PC-9 (cell line): ENCODE measurements at regions of chr22 and their contacts with region 1.

Region 1: DNA sequence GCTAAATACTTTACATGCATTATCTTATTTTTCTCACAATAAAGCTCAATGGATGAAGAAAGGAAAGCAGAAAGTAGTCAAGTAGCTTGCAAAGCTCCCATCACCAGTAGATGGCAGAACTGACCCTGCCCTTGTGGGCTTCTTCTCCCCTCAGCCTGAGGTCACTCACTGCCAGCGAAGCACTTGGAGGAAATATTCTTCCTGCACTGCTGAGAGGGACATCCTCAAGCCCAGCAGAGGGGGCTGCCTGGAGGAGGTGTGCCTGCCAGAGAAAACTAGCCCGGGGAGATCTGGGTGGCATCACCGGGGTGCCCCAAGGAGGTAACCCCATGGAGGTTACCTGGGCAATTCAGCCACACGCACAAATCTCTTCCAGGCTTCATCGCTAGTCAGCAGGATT is 6.6 kb downstream of the APOL4 start:
- DNase-seq: peak; percentile 47 to 67
- H3K4me3 ChIP-seq: no peak overlapping the region
- H3K27ac ChIP-seq: no peak overlapping the region
- H3K4me1 ChIP-seq: no peaks in the 10 kb centered on the region
- H3K27me3 ChIP-seq: peaks cover 12% of the 10 kb centered on the region; the same call in 1 of the 2 replicates
- CTCF ChIP-seq: peak; percentile 82

Region 2: DNA sequence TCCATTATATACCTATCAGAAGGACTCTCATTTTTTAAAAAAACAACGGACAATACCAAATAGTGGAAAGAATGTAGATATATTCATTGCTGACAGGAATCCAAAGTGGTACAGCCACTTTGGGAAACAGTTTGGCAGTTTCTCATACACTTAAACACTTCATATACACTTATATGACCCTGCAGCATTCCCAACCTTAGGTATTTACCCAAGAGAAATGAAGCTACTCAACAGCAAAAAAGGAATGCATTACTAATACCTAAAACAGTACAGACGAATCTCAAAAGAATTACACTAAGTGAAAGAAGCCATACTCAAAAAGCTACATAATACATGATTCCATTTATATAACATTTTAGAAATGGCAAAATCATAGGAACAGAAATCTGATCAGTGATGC is 217.8 kb before region 1 on chr22:
- CTCF ChIA-PET with region 1: no interaction called
- POLR2A ChIA-PET with region 1: no interaction called
- intact Hi-C with region 1: no loop called
- DNase-seq: no peak
- H3K4me3 ChIP-seq: no peak overlapping the region
- H3K27ac ChIP-seq: no peak overlapping the region
- H3K4me1 ChIP-seq: peaks cover 6% of the 10 kb centered on the region
- H3K27me3 ChIP-seq: no peaks in the 10 kb centered on the region
- CTCF ChIP-seq: no peak

Region 3: GRCh38 chr22:36221799-36222751 is 27.1 kb after region 1 on chr22:
- CTCF ChIA-PET with region 1: no interaction called
- POLR2A ChIA-PET with region 1: no interaction called
- intact Hi-C with region 1: loop called (anchors 1 kb)
- DNase-seq: peak in 1 of 2 experiments; percentile 52
- H3K4me3 ChIP-seq: no peak overlapping the region
- H3K27ac ChIP-seq: no peak overlapping the region
- H3K4me1 ChIP-seq: no peaks in the 10 kb centered on the region
- H3K27me3 ChIP-seq: no peaks in the 10 kb centered on the region; the same call in 1 of the 2 replicates
- CTCF ChIP-seq: peak; percentile 74

Region 4: DNA sequence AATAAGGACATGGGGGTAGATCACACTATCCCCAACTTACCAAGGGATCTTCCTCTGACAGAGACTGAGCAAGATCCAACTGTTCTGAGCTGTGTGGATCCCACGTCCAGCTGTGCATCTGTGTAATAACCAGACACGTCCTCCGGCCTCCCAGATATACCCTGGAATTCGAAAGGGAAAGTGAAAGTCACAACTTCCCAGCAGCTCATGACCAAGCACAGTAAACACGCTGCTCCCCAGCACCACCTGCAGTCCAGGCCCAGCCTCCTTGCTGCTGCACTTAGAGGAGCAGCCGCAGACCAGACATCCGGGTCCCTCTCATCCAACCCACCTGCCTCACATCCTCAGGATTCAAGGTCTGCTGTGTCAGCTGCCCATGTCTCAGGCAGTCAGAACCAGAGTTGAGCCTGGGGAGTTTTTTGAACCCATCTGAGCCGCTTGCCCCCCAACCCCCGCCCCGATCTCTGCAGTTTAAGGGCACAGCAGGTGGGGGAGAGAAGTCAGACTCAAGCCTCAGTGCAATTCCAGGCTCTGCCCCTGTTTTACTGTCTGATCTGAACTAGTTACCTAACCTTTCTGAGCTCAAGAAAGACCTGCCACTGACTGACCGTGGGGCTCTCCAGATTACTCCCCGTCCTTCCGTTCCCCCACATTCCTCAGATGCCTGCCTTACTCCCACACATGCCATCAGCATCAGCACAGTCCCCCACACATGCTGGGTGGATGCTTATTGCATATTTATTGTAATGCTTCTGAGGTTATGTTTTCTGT is 44.6 kb after region 1 on chr22 and contains the start of gene APOL2:
- CTCF ChIA-PET with region 1: interaction called, 15 read pairs
- POLR2A ChIA-PET with region 1: no interaction called
- intact Hi-C with region 1: loop called (anchors 5 kb)
- DNase-seq: peak; percentile 86 to 91
- H3K4me3 ChIP-seq: peak within 1 kb of the TSS; percentile 70
- H3K27ac ChIP-seq: peak within 1 kb of the TSS; percentile 48
- H3K4me1 ChIP-seq: peaks cover 21% of the 10 kb centered on the region
- H3K27me3 ChIP-seq: no peaks in the 10 kb centered on the region
- CTCF ChIP-seq: peak; percentile 74
- total RNA-seq, gene APOL2: 19.9 and 27.4 TPM in 2 replicates

Region 5: DNA sequence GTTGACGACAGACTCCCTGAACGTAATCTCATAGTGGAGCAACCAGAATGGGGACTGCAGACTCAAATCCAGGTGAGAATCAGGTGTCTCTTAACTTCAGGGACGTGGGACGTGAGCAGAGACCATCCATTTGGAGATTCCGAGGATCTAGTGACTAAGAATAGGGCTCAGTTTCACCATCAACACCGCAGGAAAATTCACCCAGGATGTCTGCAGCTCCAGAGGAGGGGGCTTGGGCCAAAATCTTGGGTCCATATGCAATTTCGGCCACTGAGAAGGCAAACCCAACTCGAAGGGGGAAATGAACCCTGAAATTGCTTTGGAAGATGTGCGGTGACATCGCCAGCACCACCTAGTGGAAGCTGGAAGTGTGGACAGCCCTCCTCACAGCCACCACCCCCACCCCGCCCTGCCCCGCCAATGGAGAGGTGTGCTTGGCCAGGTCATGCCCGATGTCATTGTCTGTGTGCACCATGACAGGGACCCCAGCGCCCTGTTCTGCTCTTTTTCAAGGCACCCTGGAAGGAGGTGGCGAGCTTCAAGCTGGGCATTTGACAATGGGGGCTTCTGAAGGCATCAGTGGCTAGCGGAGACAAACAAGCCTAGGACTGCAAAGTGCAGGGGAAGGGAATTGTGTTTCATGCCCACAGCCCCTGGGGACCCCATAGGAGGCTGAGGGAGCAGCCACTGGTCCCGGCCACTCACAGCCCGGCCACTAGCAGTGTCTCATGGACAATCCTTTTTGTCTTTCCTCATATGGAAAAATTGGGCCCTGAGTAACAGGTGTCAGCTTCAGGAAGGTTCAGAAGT is 82.7 kb after region 1 on chr22:
- CTCF ChIA-PET with region 1: interaction called, 3 read pairs
- POLR2A ChIA-PET with region 1: no interaction called
- intact Hi-C with region 1: loop called (anchors 5 kb)
- DNase-seq: peak; percentile 59 to 62
- H3K4me3 ChIP-seq: no peak overlapping the region
- H3K27ac ChIP-seq: no peak overlapping the region
- H3K4me1 ChIP-seq: no peaks in the 10 kb centered on the region
- H3K27me3 ChIP-seq: no peaks in the 10 kb centered on the region
- CTCF ChIP-seq: peak; percentile 91